Panc1 (cell line): ENCODE measurements at regions of chr3 and their contacts with region 1.

Region 1: DNA sequence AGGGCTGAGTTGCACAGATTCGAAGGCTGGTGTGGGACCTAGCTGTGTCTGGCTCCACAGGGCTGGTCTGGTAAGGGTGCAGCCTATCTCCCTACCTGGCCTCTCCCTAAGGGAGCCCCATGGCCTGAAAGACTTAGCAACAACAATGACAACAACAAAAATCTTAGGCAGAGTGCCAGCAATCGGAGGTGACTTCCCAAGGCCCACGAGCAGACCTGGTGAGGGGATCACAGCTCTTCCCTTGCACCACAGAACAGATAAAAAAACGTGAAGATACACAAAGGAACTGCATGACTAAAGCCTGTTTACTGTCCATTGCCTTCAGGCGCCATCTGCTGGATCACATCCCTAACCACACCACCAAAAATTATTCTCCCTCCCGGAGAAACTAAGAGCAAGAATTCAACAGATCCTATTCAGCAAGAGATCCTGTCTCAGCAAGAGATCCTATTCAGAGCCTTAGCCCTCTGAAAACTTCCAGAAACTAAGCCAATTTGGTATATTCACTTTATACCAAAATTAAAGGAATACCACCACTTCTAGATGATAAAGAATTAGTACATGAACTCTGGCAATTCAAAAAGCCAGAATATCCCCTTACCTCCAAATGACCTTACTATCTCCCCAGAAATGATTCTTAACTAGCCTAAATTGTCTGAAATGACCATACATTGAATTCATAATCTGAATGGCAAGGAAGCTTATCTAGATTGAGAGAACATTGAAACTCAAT is 24.1 kb upstream of the OR5K4 start:
- DNase-seq: peak; percentile 54
- ATAC-seq: peak; percentile 86
- H3K4me3 ChIP-seq: no peak overlapping the region
- H3K27ac ChIP-seq: no peak overlapping the region
- H3K4me1 ChIP-seq: no peaks in the 10 kb centered on the region
- H3K27me3 ChIP-seq: no peaks in the 10 kb centered on the region
- CTCF ChIP-seq: peak; percentile 87

Region 2: GRCh38 chr3:98039322-98040024 is 290.1 kb before region 1 on chr3:
- CTCF ChIA-PET with region 1: no interaction called
- POLR2A ChIA-PET with region 1: no interaction called
- in situ Hi-C with region 1: no loop called
- intact Hi-C with region 1: loop called (anchors 1 kb)
- DNase-seq: peak; percentile 87
- ATAC-seq: peak; percentile 96
- H3K4me3 ChIP-seq: peak overlapping the region in 1 of 2 experiments; percentile 48; a peak in 2 of 4 replicates
- H3K27ac ChIP-seq: no peak overlapping the region
- H3K4me1 ChIP-seq: no peaks in the 10 kb centered on the region
- H3K27me3 ChIP-seq: peaks cover 25% of the 10 kb centered on the region
- CTCF ChIP-seq: peak; percentile 97

Region 3: DNA sequence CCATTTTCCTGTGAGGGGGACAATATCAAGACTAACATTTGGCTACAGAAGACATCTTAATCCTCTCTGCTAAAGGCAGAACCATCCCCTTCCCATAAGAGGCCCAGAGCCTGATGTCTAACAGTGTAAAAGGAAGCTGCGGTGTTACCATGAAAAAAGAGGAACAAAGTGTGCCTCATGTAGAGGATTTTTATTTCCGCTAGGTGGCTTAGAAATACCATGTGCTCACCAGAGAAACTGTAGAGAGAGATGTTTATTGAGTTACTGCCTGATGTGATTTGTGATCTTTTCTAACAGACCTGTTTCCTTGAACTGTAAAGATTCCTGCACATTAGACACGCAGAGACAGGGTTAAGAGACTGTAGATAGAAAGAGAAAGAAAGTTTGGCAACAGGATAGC is 141.0 kb before region 1 on chr3:
- CTCF ChIA-PET with region 1: no interaction called
- POLR2A ChIA-PET with region 1: no interaction called
- in situ Hi-C with region 1: no loop called
- intact Hi-C with region 1: loop called (anchors 2 kb)
- DNase-seq: no peak
- ATAC-seq: peak; percentile 66; the same call in 1 of the 2 replicates
- H3K4me3 ChIP-seq: no peak overlapping the region
- H3K27ac ChIP-seq: no peak overlapping the region
- H3K4me1 ChIP-seq: no peaks in the 10 kb centered on the region
- H3K27me3 ChIP-seq: no peaks in the 10 kb centered on the region
- CTCF ChIP-seq: peak; percentile 40; the same call in 1 of the 2 replicates

Region 4: GRCh38 chr3:98573181-98573728 is 243.7 kb after region 1 on chr3:
- CTCF ChIA-PET with region 1: no interaction called
- POLR2A ChIA-PET with region 1: no interaction called
- in situ Hi-C with region 1: no loop called
- intact Hi-C with region 1: loop called (anchors 10 kb)
- DNase-seq: no peak
- ATAC-seq: no peak
- H3K4me3 ChIP-seq: no peak overlapping the region
- H3K27ac ChIP-seq: no peak overlapping the region
- H3K4me1 ChIP-seq: no peaks in the 10 kb centered on the region
- H3K27me3 ChIP-seq: peaks cover 3% of the 10 kb centered on the region; the same call in 1 of the 2 replicates
- CTCF ChIP-seq: peak; percentile 46; the same call in 1 of the 2 replicates

Region 5: DNA sequence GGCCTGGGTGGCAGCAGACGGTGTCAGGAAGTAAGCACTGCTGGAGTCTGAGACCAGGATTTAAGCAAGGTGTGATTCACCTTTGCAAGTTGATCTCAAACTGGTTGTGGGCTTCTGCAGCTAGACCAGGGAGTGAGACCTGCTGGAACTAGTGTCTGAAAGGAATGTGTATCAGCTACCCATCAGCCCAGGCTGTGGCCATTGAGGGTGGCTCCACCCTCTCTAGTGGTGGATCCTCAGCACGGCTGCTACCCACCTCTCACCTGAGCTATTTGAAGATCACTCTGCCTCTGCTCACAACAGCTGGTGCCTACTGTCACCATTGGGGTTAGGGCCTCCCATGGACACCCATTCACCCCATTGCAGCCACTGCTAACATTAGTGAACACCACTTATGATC is 712.2 kb after region 1 on chr3:
- CTCF ChIA-PET with region 1: no interaction called
- POLR2A ChIA-PET with region 1: no interaction called
- in situ Hi-C with region 1: no loop called
- intact Hi-C with region 1: no loop called
- DNase-seq: no peak
- ATAC-seq: no peak
- H3K4me3 ChIP-seq: no peak overlapping the region
- H3K27ac ChIP-seq: no peak overlapping the region
- H3K4me1 ChIP-seq: no peaks in the 10 kb centered on the region
- H3K27me3 ChIP-seq: no peaks in the 10 kb centered on the region
- CTCF ChIP-seq: no peak